ENCODE measurements at regions of chr5 and their contacts with region 1.

Region 1: GRCh38 chr5:116885825-116886224 is 311.2 kb upstream of the SEMA6A start:
- DNase-seq: no peak
- H3K4me3 ChIP-seq: no peak overlapping the region
- H3K27ac ChIP-seq: no peak overlapping the region
- H3K4me1 ChIP-seq: peaks cover 19 to 27% of the 10 kb centered on the region in 2 donors
- H3K27me3 ChIP-seq: no peaks in the 10 kb centered on the region
- CTCF ChIP-seq: no peak
- POLR2A ChIP-seq: no peak

Region 2: GRCh38 chr5:116361171-116361967 is 524.5 kb before region 1 on chr5:
- intact Hi-C with region 1: no loop called
- DNase-seq: peak; percentile 68 to 76
- H3K4me3 ChIP-seq: peak overlapping the region in 1 of 3 donors; percentile 16
- H3K27ac ChIP-seq: no peak overlapping the region
- H3K4me1 ChIP-seq: peaks cover 15 to 21% of the 10 kb centered on the region in 2 donors
- H3K27me3 ChIP-seq: no peaks in the 10 kb centered on the region
- CTCF ChIP-seq: peak in 2 of 6 experiments; percentile 11 to 31
- POLR2A ChIP-seq: no peak

Region 3: DNA sequence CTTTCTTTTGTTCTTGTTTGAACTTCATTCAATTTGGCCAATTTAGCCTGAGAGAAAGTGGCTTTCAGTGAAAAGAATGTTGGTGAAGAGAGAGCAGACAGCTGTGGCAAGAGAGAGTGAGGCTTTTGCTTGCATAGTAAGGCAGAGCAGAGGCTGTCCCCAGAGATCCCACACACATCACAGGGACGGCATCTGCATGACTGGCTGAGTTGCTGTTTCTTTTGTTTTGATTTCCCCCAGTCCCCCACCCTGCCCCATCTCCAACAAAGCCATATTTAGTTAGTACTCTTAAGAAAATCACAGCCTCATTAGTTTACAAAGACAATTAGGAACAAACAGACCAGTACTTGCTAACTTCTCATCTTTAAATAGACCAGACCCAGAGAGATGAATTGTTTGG is 52.7 kb after region 1 on chr5:
- intact Hi-C with region 1: loop called (anchors 10 kb)
- DNase-seq: peak; percentile 15 to 20
- H3K4me3 ChIP-seq: no peak overlapping the region
- H3K27ac ChIP-seq: peak overlapping the region; percentile 45 to 84 (median 77)
- H3K4me1 ChIP-seq: peaks cover 23 to 27% of the 10 kb centered on the region in 2 donors
- H3K27me3 ChIP-seq: no peaks in the 10 kb centered on the region
- CTCF ChIP-seq: no peak
- POLR2A ChIP-seq: no peak

Region 4: DNA sequence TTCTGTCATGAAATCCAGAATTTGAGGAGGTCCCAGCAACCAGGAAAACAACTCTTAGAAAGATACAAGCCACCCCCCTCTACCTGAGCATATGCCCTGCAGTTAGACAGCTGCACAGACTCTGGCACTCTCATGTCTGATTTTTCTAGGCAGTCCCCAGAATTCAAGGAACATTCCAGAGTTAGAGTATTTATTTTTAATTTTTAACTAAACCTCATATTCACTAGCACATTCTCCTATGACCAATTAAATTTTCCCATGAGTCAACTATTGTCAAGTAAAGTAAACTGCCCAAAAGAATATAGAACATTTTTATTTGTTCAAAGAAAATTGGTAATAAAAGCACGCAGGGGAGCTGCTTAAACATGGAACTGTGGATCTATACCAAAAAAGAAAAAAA is 179.3 kb after region 1 on chr5:
- intact Hi-C with region 1: no loop called
- DNase-seq: no peak
- H3K4me3 ChIP-seq: no peak overlapping the region
- H3K27ac ChIP-seq: no peak overlapping the region
- H3K4me1 ChIP-seq: no peaks in the 10 kb centered on the region
- H3K27me3 ChIP-seq: no peaks in the 10 kb centered on the region
- CTCF ChIP-seq: no peak
- POLR2A ChIP-seq: no peak

Measured in thyroid gland (tissue), 4 donors.